IMR-90 (cell line): ENCODE measurements at regions of chr7 and their contacts with region 1.

Region 1: DNA sequence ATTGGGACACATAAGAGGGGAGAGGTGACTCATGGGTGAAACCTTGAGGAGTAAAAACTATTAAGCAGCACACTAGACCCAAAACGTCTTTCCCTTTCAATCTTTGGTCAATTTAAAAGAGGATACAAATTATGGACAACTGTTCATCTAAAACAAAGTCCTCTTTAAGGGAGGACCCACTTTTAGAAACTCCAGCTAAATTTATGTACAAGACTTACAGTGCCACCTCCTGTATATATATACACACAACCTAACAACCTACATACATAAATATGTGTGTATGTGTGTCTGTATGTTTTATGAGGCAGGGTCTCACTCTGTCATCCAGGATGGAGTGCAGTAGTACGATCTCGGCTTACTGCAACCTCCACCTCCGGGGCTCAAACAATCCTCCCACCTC is 18.1 kb upstream of the ZC3HAV1 start:
- DNase-seq: peak; percentile 48
- ATAC-seq: peak; percentile 74; the same call in 1 of the 2 replicates
- H3K4me3 ChIP-seq: no peak overlapping the region
- H3K27ac ChIP-seq: no peak overlapping the region
- H3K4me1 ChIP-seq: no peaks in the 10 kb centered on the region
- H3K27me3 ChIP-seq: peaks cover 18% of the 10 kb centered on the region
- CTCF ChIP-seq: peak; percentile 49
- POLR2A ChIP-seq: no peak
- RAD21 ChIP-seq: peak; percentile 55

Region 2: GRCh38 chr7:138886501-138886917 is 241.1 kb before region 1 on chr7:
- CTCF ChIA-PET with region 1: interaction called, 5 read pairs
- POLR2A ChIA-PET with region 1: no interaction called
- dilution Hi-C with region 1: no loop called
- in situ Hi-C with region 1: no loop called
- intact Hi-C with region 1: loop called (anchors 5 kb)
- DNase-seq: peak; percentile 73
- ATAC-seq: peak; percentile 79
- H3K4me3 ChIP-seq: no peak overlapping the region
- H3K27ac ChIP-seq: no peak overlapping the region
- H3K4me1 ChIP-seq: peaks cover 6% of the 10 kb centered on the region; the same call in 1 of the 2 replicates
- H3K27me3 ChIP-seq: no peaks in the 10 kb centered on the region
- CTCF ChIP-seq: peak; percentile 77
- POLR2A ChIP-seq: no peak
- RAD21 ChIP-seq: peak; percentile 66

Region 3: GRCh38 chr7:139016931-139017511 is 110.6 kb before region 1 on chr7:
- CTCF ChIA-PET with region 1: no interaction called
- POLR2A ChIA-PET with region 1: no interaction called
- dilution Hi-C with region 1: no loop called
- in situ Hi-C with region 1: no loop called
- intact Hi-C with region 1: loop called (anchors 1 kb)
- DNase-seq: peak; percentile 75
- ATAC-seq: peak; percentile 97
- H3K4me3 ChIP-seq: no peak overlapping the region
- H3K27ac ChIP-seq: no peak overlapping the region
- H3K4me1 ChIP-seq: no peaks in the 10 kb centered on the region
- H3K27me3 ChIP-seq: peaks cover 5% of the 10 kb centered on the region; the same call in 1 of the 2 replicates
- CTCF ChIP-seq: peak; percentile 63
- POLR2A ChIP-seq: no peak
- RAD21 ChIP-seq: peak; percentile 53

Region 4: GRCh38 chr7:139218173-139218572 is 90.5 kb after region 1 on chr7:
- CTCF ChIA-PET with region 1: no interaction called
- POLR2A ChIA-PET with region 1: no interaction called
- dilution Hi-C with region 1: no loop called
- in situ Hi-C with region 1: no loop called
- intact Hi-C with region 1: no loop called
- DNase-seq: no peak
- ATAC-seq: no peak
- H3K4me3 ChIP-seq: no peak overlapping the region
- H3K27ac ChIP-seq: no peak overlapping the region
- H3K4me1 ChIP-seq: no peaks in the 10 kb centered on the region
- H3K27me3 ChIP-seq: no peaks in the 10 kb centered on the region
- CTCF ChIP-seq: no peak
- POLR2A ChIP-seq: no peak
- RAD21 ChIP-seq: no peak